AG04449 (cell line): ENCODE measurements at regions of chr13 and their contacts with region 1.

Region 1: GRCh38 chr13:25095862-25096453 is at the start of gene PABPC3:
- DNase-seq: no peak
- H3K4me3 ChIP-seq: peak within 1 kb of the TSS; percentile 30
- CTCF ChIP-seq: no peak

Region 2: GRCh38 chr13:25085125-25085742 is 10.7 kb before region 1 on chr13:
- CTCF ChIA-PET with region 1: interaction called, 12 read pairs
- POLR2A ChIA-PET with region 1: no interaction called
- DNase-seq: no peak
- H3K4me3 ChIP-seq: no peak overlapping the region
- CTCF ChIP-seq: peak; percentile 53

Region 3: DNA sequence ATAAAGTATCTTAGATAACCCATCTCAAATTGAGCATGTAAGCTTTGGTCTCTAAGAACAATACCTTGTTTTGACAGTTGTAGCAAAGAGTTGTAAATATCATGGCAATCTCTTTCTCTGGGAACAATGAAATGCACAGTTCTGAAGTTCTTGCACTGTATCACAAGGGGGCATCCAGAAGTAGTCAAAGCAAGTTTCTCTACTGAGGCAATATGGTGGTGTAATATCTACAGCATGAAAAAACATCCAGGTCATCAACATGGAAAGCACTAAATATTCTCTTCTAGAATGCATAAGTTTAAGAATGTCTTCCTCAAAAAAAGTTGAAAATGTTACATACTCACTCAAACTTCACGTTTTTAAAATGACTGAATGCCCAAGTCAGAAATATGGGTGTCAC is 171.8 kb after region 1 on chr13:
- CTCF ChIA-PET with region 1: no interaction called
- POLR2A ChIA-PET with region 1: no interaction called
- DNase-seq: no peak
- H3K4me3 ChIP-seq: no peak overlapping the region
- CTCF ChIP-seq: peak; percentile 13